Activated CD4-positive, alpha-beta T cell treated with anti-CD3 and anti-CD28 coated beads for 36 hours (primary cell): ENCODE measurements at regions of chr4 and their contacts with region 1.

Region 1: GRCh38 chr4:98260579-98261290 is 449 bp upstream of the RAP1GDS1 start:
- DNase-seq: peak; percentile 97
- ATAC-seq: peak; percentile 89
- H3K4me3 Mint-ChIP-seq: peak overlapping the region; percentile 91
- H3K27ac Mint-ChIP-seq: peak overlapping the region; percentile 95
- H3K4me1 Mint-ChIP-seq: peaks cover 49% of the 10 kb centered on the region
- H3K27me3 Mint-ChIP-seq: no peaks in the 10 kb centered on the region

Region 2: GRCh38 chr4:97627750-97628149 is 633.0 kb before region 1 on chr4:
- CTCF ChIA-PET with region 1: no interaction called
- POLR2A ChIA-PET with region 1: no interaction called
- intact Hi-C with region 1: no loop called
- DNase-seq: no peak
- ATAC-seq: no peak
- H3K4me3 Mint-ChIP-seq: no peak overlapping the region
- H3K27ac Mint-ChIP-seq: no peak overlapping the region
- H3K4me1 Mint-ChIP-seq: no peaks in the 10 kb centered on the region
- H3K27me3 Mint-ChIP-seq: no peaks in the 10 kb centered on the region

Region 3: GRCh38 chr4:98143001-98143899 is 117.5 kb before region 1 on chr4 and contains the start of gene STPG2:
- CTCF ChIA-PET with region 1: interaction called, 3 read pairs
- POLR2A ChIA-PET with region 1: interaction called, 9 read pairs
- intact Hi-C with region 1: loop called (anchors 1 kb)
- DNase-seq: peak; percentile 96
- ATAC-seq: peak; percentile 100
- H3K4me3 Mint-ChIP-seq: peak within 1 kb of the TSS; percentile 96
- H3K27ac Mint-ChIP-seq: peak within 1 kb of the TSS; percentile 99
- H3K4me1 Mint-ChIP-seq: peaks cover 22% of the 10 kb centered on the region
- H3K27me3 Mint-ChIP-seq: no peaks in the 10 kb centered on the region
- total RNA-seq, gene STPG2: 0.14 to 0.25 TPM

Region 4: DNA sequence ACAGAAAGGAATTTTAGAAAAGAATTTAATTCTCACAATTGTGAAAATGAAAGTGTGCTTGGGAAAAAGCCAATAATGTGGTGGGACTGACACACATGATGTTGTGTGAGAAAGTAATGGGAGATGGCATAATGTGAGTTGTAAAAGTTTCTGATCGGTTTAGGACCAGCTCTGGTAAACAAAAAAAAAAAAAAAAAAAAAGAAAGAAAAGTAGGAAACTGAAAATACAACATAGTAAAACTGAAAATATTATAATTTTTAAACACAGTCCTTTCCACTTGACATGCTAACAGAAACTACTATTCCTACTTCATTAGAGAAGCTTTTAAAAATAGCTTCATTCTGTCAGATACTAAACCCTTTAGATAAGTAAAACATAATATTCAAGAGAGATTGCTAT is 28.6 kb after region 1 on chr4:
- CTCF ChIA-PET with region 1: interaction called, 6 read pairs
- POLR2A ChIA-PET with region 1: no interaction called
- intact Hi-C with region 1: loop called in 1 of 2 experiments (anchors 2 kb)
- DNase-seq: no peak
- ATAC-seq: peak; percentile 52
- H3K4me3 Mint-ChIP-seq: peak overlapping the region; percentile 26
- H3K27ac Mint-ChIP-seq: peak overlapping the region; percentile 51
- H3K4me1 Mint-ChIP-seq: peaks cover 50% of the 10 kb centered on the region
- H3K27me3 Mint-ChIP-seq: no peaks in the 10 kb centered on the region

Region 5: GRCh38 chr4:98446499-98447375 is 186.0 kb after region 1 on chr4:
- CTCF ChIA-PET with region 1: no interaction called
- POLR2A ChIA-PET with region 1: interaction called, 3 read pairs
- intact Hi-C with region 1: loop called (anchors 1 to 2 kb)
- DNase-seq: peak; percentile 78
- ATAC-seq: peak; percentile 91
- H3K4me3 Mint-ChIP-seq: peak overlapping the region; percentile 43
- H3K27ac Mint-ChIP-seq: peak overlapping the region; percentile 93
- H3K4me1 Mint-ChIP-seq: peaks cover 36% of the 10 kb centered on the region
- H3K27me3 Mint-ChIP-seq: no peaks in the 10 kb centered on the region

Region 6: GRCh38 chr4:99054428-99054994 is 793.8 kb after region 1 on chr4:
- CTCF ChIA-PET with region 1: no interaction called
- POLR2A ChIA-PET with region 1: no interaction called
- intact Hi-C with region 1: loop called (anchors 5 to 10 kb)
- DNase-seq: no peak
- ATAC-seq: peak; percentile 23
- H3K4me3 Mint-ChIP-seq: no peak overlapping the region
- H3K27ac Mint-ChIP-seq: peak overlapping the region; percentile 63
- H3K4me1 Mint-ChIP-seq: peaks cover 44% of the 10 kb centered on the region
- H3K27me3 Mint-ChIP-seq: no peaks in the 10 kb centered on the region

Region 7: DNA sequence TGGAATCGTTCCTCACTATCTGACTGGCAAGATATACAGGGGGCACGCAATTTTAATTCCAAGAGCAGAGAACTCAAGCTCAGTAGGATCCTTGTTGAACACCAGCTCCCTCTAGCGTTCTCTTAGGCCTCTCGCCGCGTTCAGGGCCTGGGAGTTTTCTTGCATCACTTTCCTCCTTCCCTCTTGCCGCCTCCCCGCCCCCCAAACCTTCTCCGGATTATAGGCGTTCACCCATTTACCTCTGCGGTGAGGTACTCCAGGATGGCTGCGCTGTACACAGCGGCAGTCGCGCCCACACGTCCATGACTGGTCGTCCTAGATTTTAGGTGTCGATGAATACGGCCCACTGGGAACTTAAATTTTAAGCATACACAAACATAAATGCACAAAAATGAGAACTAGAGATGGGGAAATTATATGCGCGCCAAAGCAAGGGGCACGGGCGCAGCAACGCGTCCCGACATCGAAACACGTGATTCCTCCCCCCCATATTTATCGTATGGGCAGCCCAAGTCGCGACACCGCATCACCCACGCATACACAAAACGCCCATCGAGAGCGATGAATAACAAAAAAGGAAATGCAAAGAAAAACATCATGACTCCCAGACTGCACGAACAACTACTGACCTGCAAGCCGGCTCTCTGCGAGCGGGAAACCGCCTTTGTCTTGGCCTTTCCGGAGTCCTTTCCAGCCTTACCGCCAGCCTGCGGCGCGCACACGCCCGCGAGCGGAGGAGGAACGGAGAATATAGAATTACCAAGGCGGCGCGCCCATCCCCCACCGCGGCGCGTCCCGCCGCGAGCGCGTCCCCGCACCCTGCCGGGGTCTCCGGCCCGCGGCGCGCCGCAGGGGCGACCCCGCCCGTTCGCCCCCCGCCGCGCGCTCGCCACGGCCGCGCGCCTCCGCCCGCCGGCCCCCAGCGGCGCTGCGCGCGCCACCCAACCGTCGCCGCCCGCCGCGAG is 1688.6 kb after region 1 on chr4:
- CTCF ChIA-PET with region 1: no interaction called
- POLR2A ChIA-PET with region 1: no interaction called
- intact Hi-C with region 1: loop called in 1 of 2 experiments (anchors 5 kb)
- DNase-seq: peak; percentile 96
- ATAC-seq: peak; percentile 52
- H3K4me3 Mint-ChIP-seq: no peak overlapping the region
- H3K27ac Mint-ChIP-seq: no peak overlapping the region
- H3K4me1 Mint-ChIP-seq: peaks cover 33% of the 10 kb centered on the region
- H3K27me3 Mint-ChIP-seq: no peaks in the 10 kb centered on the region